Aorta (tissue), 5 donors: ENCODE measurements at regions of chr10 and their contacts with region 1.

Region 1: GRCh38 chr10:6401562-6402348 is 178.3 kb downstream of the PRKCQ start:
- DNase-seq: peak; percentile 85 to 87
- ATAC-seq: peak; percentile 95
- H3K4me3 ChIP-seq: peak overlapping the region in 1 of 2 donors; percentile 47
- H3K27ac ChIP-seq: peak overlapping the region in 1 of 2 donors; percentile 27
- H3K4me1 ChIP-seq: no peaks in the 10 kb centered on the region
- H3K27me3 ChIP-seq: no peaks in the 10 kb centered on the region

Region 2: DNA sequence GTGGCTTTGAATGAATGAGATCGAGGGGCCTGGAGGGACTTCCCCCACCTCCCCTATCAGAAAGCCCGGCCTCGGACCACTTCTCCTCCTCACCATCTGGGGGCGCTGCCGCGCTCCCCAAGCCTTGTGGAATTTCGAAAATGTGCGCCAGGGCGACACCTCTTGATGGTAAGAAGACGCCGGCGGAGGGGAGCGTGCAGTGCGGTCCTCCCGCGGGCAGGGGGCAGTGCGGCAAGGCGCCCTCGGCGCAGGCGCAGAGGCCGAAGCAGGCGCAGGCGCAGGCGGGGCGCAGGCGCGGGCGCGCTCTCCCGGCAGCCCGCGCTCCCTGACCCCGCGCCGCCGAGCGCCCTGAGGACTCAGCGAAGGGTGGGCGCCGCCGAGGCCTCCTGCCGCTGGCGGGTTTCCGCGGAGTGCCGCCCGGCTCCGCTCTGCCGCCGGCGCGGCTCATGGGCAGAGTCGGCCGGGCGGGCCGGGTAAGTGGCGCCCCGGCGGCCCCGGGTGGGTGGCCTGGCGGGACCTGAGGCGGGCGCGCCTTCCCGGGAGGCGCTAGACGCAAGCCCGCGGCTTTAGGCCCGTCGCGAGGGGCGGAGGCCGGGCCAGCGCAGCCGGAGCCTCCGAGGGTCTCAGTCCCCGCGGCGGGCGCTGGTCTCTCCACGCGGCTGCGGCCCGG is 312.9 kb before region 1 on chr10 and contains the start of gene RBM17:
- intact Hi-C with region 1: loop called (anchors 5 kb)
- DNase-seq: peak; percentile 98
- ATAC-seq: peak; percentile 99
- H3K4me3 ChIP-seq: peak within 1 kb of the TSS; percentile 90 to 95
- H3K27ac ChIP-seq: peak within 1 kb of the TSS in 1 of 2 donors; percentile 49
- H3K4me1 ChIP-seq: peaks cover 0 to 4% of the 10 kb centered on the region in 2 donors
- H3K27me3 ChIP-seq: no peaks in the 10 kb centered on the region
- total RNA-seq, gene RBM17: 82.0 to 94.1 TPM

Region 3: GRCh38 chr10:6108603-6109443 is 292.9 kb before region 1 on chr10:
- intact Hi-C with region 1: loop called (anchors 1 to 2 kb)
- DNase-seq: no peak
- ATAC-seq: peak; percentile 73
- H3K4me3 ChIP-seq: no peak overlapping the region
- H3K27ac ChIP-seq: no peak overlapping the region
- H3K4me1 ChIP-seq: no peaks in the 10 kb centered on the region
- H3K27me3 ChIP-seq: no peaks in the 10 kb centered on the region

Region 4: GRCh38 chr10:6275022-6275997 is 126.4 kb before region 1 on chr10:
- intact Hi-C with region 1: loop called in 1 of 2 experiments (anchors 2 kb)
- DNase-seq: peak; percentile 97 to 99
- ATAC-seq: peak; percentile 95
- H3K4me3 ChIP-seq: no peak overlapping the region
- H3K27ac ChIP-seq: peak overlapping the region; percentile 79 to 100
- H3K4me1 ChIP-seq: peaks cover 2 to 4% of the 10 kb centered on the region in 2 donors
- H3K27me3 ChIP-seq: no peaks in the 10 kb centered on the region